Dendritic cell treated with granulocyte-macrophage colony-stimulating factor and Interleukin-4, amounts not matched to agents 40 ng/mL and 50 ng/mL, for 4 days (primary cell): ENCODE measurements at regions of chr12 and their contacts with region 1.

Region 1: DNA sequence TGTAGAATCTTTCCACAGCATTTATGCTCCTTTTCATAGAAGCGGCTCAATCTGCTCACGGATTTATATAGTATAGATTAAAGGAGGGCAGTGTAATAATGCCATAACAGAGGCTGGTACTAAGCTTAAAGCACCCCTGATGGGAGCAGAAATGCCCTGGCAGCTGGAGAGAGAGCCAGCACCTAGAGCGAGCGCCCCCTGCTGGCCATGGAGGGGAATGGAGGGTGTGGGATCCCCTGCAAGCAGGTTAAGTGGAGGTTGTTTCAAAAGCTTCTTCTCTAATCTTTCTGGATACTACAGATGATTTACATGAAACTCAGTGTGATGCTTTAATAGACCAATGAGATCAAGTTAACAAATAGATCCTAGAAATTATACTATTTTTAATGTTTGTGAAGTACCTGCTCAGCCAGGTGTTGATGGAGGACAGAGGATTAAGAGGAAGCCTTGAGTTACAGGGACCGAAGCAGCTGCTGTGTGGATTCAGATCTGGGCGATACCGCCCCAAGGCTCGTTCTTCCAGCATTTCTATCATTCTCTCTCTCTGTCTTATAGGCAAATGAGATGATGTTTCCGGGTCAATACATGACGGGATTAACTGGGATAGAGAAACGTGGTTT is 1519.3 kb upstream of the TMEM132C start:
- H3K4me3 Mint-ChIP-seq: no peak overlapping the region
- H3K27ac Mint-ChIP-seq: no peak overlapping the region
- H3K4me1 Mint-ChIP-seq: no peaks in the 10 kb centered on the region
- H3K27me3 Mint-ChIP-seq: no peaks in the 10 kb centered on the region

Region 2: GRCh38 chr12:125183187-125184067 is 1564.2 kb before region 1 on chr12:
- intact Hi-C with region 1: loop called (anchors 2 kb)
- H3K4me3 Mint-ChIP-seq: no peak overlapping the region
- H3K27ac Mint-ChIP-seq: no peak overlapping the region
- H3K4me1 Mint-ChIP-seq: peaks cover 9% of the 10 kb centered on the region
- H3K27me3 Mint-ChIP-seq: peaks cover 69% of the 10 kb centered on the region

Region 3: GRCh38 chr12:126483145-126484068 is 264.2 kb before region 1 on chr12:
- intact Hi-C with region 1: no loop called
- H3K4me3 Mint-ChIP-seq: no peak overlapping the region
- H3K27ac Mint-ChIP-seq: no peak overlapping the region
- H3K4me1 Mint-ChIP-seq: no peaks in the 10 kb centered on the region
- H3K27me3 Mint-ChIP-seq: no peaks in the 10 kb centered on the region

Region 4: GRCh38 chr12:126768517-126768916 is 20.9 kb after region 1 on chr12:
- intact Hi-C with region 1: no loop called
- H3K4me3 Mint-ChIP-seq: no peak overlapping the region
- H3K27ac Mint-ChIP-seq: no peak overlapping the region
- H3K4me1 Mint-ChIP-seq: no peaks in the 10 kb centered on the region
- H3K27me3 Mint-ChIP-seq: no peaks in the 10 kb centered on the region

Region 5: DNA sequence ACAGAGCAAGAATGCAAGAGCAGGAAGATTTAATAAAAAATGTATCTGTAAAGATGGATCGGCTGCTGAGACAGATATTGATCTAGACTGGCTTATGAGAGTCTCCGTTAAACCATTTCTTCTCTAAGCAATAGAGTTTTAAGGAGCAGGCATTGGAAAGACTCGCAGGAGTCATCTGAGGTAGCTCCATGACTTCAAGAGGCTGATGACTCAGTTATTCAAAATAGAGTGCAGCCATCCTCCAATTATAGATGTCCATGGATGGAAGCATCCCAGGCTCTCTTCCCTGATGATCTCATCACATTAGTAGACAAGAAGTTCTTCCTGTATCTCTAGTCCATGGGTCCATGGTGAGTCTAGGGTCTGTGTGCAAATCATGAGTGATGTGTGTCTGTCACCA is 881.0 kb after region 1 on chr12:
- intact Hi-C with region 1: no loop called
- H3K4me3 Mint-ChIP-seq: no peak overlapping the region
- H3K27ac Mint-ChIP-seq: no peak overlapping the region
- H3K4me1 Mint-ChIP-seq: no peaks in the 10 kb centered on the region
- H3K27me3 Mint-ChIP-seq: no peaks in the 10 kb centered on the region